ENCODE measurements at regions of chr1 and their contacts with region 1.

Region 1: GRCh38 chr1:66824771-66825170 is 23.7 kb upstream of the INSL5 start:
- DNase-seq: no peak
- ATAC-seq: no peak
- H3K4me3 ChIP-seq: no peak overlapping the region
- H3K27ac ChIP-seq: no peak overlapping the region
- H3K4me1 ChIP-seq: no peaks in the 10 kb centered on the region
- H3K27me3 ChIP-seq: no peaks in the 10 kb centered on the region
- CTCF ChIP-seq: no peak
- POLR2A ChIP-seq: no peak
- RAD21 ChIP-seq: no peak

Region 2: GRCh38 chr1:66840929-66841328 is 16.2 kb after region 1 on chr1:
- CTCF ChIA-PET with region 1: no interaction called
- POLR2A ChIA-PET with region 1: no interaction called
- dilution Hi-C with region 1: no loop called
- in situ Hi-C with region 1: no loop called
- intact Hi-C with region 1: loop called (anchors 2 kb)
- DNase-seq: no peak
- ATAC-seq: no peak
- H3K4me3 ChIP-seq: no peak overlapping the region
- H3K27ac ChIP-seq: no peak overlapping the region
- H3K4me1 ChIP-seq: no peaks in the 10 kb centered on the region
- H3K27me3 ChIP-seq: no peaks in the 10 kb centered on the region
- CTCF ChIP-seq: no peak
- POLR2A ChIP-seq: no peak
- RAD21 ChIP-seq: no peak

Region 3: GRCh38 chr1:66947267-66947666 is 122.5 kb after region 1 on chr1:
- CTCF ChIA-PET with region 1: no interaction called
- POLR2A ChIA-PET with region 1: interaction called, 10 read pairs
- dilution Hi-C with region 1: no loop called
- in situ Hi-C with region 1: no loop called
- intact Hi-C with region 1: no loop called
- DNase-seq: peak; percentile 51
- ATAC-seq: peak; percentile 18; the same call in 1 of the 2 replicates
- H3K4me3 ChIP-seq: no peak overlapping the region
- H3K27ac ChIP-seq: no peak overlapping the region
- H3K4me1 ChIP-seq: peaks cover 6% of the 10 kb centered on the region; the same call in 1 of the 2 replicates
- H3K27me3 ChIP-seq: no peaks in the 10 kb centered on the region
- CTCF ChIP-seq: no peak
- POLR2A ChIP-seq: no peak
- RAD21 ChIP-seq: no peak

Measured in IMR-90 (cell line).